Head of caudate nucleus (tissue), 42 donors: ENCODE measurements at regions of chr2 and their contacts with region 1.

Region 1: GRCh38 chr2:100562732-100563720 is at the start of gene PDCL3:
- DNase-seq: peak; percentile 86 to 98 (median 94)

Region 2: DNA sequence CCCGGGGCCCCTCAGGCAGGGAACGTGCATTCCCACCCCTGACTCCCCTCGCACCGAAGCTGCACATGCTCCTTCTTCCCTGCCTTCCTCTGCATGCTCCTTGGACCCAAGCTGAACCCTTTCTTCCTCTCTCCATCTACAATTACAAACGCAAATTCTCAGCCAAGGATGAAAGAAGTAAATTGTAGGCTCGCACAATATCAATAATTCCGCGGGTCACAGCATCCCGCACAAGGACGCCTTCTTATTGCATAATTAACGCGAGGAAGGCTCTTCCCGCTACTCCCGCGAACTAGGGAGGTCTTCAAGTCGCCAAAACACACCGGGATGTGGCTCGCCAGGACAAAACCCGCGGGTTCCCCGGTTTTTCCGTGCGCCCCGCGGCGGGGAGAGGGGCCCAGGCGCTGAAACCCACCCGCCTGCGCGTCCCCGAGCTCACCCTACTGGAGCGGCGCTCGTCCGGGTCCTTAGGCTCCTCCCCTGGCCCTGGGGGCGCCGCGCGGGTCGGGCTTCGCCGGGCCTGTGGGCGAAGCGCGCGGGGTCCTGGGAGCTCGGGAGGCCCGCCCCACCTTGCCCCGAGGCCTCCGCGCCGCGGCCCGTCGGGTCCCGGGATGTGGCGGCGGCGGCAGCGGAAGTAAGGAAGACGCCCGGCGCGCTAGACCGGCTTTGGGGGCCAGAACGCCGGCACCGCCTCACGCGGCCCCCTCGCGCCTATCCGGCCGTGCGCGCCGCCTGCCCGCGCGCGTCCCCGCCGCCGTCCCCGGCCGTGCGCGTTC is 145.9 kb before region 1 on chr2 and contains the start of gene CHST10:
- intact Hi-C with region 1: loop called (anchors 5 kb)
- DNase-seq: peak in 41 of 42 donors; percentile 39 to 86 (median 73)

Region 3: GRCh38 chr2:100427628-100428258 is 135.3 kb before region 1 on chr2:
- intact Hi-C with region 1: loop called (anchors 2 kb)
- DNase-seq: peak; percentile 60 to 91 (median 80)

Region 4: GRCh38 chr2:100588071-100588786 is 25.2 kb after region 1 on chr2:
- intact Hi-C with region 1: no loop called
- DNase-seq: peak in 1 of 42 donors; percentile 15